CD4-positive, alpha-beta T cell (primary cell): ENCODE measurements at regions of chr4 and their contacts with region 1.

Region 1: GRCh38 chr4:55444827-55445226 is 49.1 kb downstream of the TMEM165 start:
- DNase-seq: peak in 2 of 14 experiments; percentile 20 to 26
- ATAC-seq: no peak
- H3K4me3 ChIP-seq: no peak overlapping the region
- H3K4me3 Mint-ChIP-seq: no peak overlapping the region
- H3K27ac ChIP-seq: no peak overlapping the region
- H3K27ac Mint-ChIP-seq: no peak overlapping the region
- H3K4me1 ChIP-seq: peaks cover 5% of the 10 kb centered on the region
- H3K4me1 Mint-ChIP-seq: peaks cover 23% of the 10 kb centered on the region
- H3K27me3 ChIP-seq: no peaks in the 10 kb centered on the region
- H3K27me3 Mint-ChIP-seq: no peaks in the 10 kb centered on the region
- CTCF ChIP-seq: no peak

Region 2: DNA sequence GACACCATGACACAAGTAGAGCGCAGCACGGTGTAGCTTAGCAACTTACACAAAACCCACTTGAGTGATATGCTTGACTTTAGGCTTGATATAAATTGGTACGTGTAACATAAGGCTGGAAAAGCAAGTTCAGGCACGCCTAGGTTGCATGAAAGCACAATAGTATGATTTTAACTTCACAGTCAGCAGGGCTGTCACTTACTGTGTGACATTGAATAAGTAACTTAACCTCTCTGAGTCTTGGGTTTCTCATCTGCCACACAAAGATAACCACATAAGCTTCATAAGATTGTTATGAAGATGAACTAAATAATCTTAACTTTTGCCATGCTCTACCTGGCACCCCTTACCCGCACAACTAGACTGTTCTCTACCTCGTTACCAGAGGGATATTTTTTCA is 89.3 kb before region 1 on chr4:
- CTCF ChIA-PET with region 1: no interaction called
- POLR2A ChIA-PET with region 1: no interaction called
- intact Hi-C with region 1: no loop called
- DNase-seq: no peak
- ATAC-seq: no peak
- H3K4me3 ChIP-seq: no peak overlapping the region
- H3K4me3 Mint-ChIP-seq: no peak overlapping the region
- H3K27ac ChIP-seq: no peak overlapping the region
- H3K27ac Mint-ChIP-seq: no peak overlapping the region
- H3K4me1 ChIP-seq: no peaks in the 10 kb centered on the region
- H3K4me1 Mint-ChIP-seq: no peaks in the 10 kb centered on the region
- H3K27me3 ChIP-seq: no peaks in the 10 kb centered on the region
- H3K27me3 Mint-ChIP-seq: no peaks in the 10 kb centered on the region
- CTCF ChIP-seq: no peak

Region 3: DNA sequence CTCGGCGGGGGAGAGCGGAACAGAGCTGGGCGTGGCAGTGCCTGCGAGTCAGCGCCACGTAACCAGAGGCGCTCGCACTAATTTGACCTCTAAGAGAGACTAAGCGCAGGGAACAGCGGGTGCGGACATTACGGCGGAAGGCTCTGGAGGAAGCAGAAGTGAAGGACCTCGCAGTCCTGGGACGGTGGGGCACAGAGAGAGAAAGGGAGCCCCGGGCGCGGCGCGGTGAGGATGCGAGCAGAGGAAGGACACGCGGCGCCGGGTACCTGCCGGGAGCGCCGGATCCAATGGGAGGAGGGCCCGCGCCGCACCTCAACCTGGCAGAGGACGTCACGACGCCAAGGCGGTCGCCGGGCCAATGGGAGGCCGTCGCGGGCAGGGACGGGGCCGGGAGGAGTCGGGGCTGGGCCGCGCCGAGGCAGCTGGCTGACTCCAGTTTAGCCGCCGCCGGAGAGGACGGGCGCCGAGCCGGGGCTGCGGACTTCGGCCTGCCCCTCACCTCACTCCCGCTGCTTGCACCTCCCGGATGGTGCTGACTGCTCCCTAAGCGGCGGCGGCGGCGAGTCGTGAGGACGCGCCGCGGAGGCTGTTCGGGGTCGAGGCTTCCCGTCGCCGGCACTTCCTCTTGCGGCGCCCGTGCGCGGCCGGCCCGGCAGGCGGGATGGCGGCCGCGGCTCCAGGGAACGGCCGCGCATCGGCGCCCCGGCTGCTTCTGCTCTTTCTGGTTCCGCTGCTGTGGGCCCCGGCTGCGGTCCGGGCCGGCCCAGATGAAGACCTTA is 49.1 kb before region 1 on chr4 and contains the start of gene TMEM165:
- CTCF ChIA-PET with region 1: interaction called, 3 read pairs
- POLR2A ChIA-PET with region 1: interaction called, 3 read pairs
- intact Hi-C with region 1: loop called in 1 of 2 experiments (anchors 5 kb)
- DNase-seq: peak; percentile 77 to 94 (median 84)
- ATAC-seq: peak; percentile 93
- H3K4me3 ChIP-seq: peak within 1 kb of the TSS; percentile 79
- H3K4me3 Mint-ChIP-seq: peak within 1 kb of the TSS; percentile 97
- H3K27ac ChIP-seq: peak within 1 kb of the TSS; percentile 73 to 94
- H3K27ac Mint-ChIP-seq: peak within 1 kb of the TSS; percentile 89
- H3K4me1 ChIP-seq: peaks cover 34% of the 10 kb centered on the region
- H3K4me1 Mint-ChIP-seq: peaks cover 44% of the 10 kb centered on the region
- H3K27me3 ChIP-seq: no peaks in the 10 kb centered on the region
- H3K27me3 Mint-ChIP-seq: no peaks in the 10 kb centered on the region
- CTCF ChIP-seq: no peak
- total RNA-seq, gene TMEM165: 44.8 to 46.0 TPM

Region 4: GRCh38 chr4:55554453-55555030 is 109.7 kb after region 1 on chr4:
- CTCF ChIA-PET with region 1: interaction called, 4 read pairs
- POLR2A ChIA-PET with region 1: no interaction called
- intact Hi-C with region 1: loop called (anchors 5 kb)
- DNase-seq: peak in 4 of 14 experiments; percentile 10 to 65 (median 62)
- ATAC-seq: peak; percentile 55
- H3K4me3 ChIP-seq: no peak overlapping the region
- H3K4me3 Mint-ChIP-seq: no peak overlapping the region
- H3K27ac ChIP-seq: no peak overlapping the region
- H3K27ac Mint-ChIP-seq: no peak overlapping the region
- H3K4me1 ChIP-seq: no peaks in the 10 kb centered on the region
- H3K4me1 Mint-ChIP-seq: no peaks in the 10 kb centered on the region
- H3K27me3 ChIP-seq: no peaks in the 10 kb centered on the region
- H3K27me3 Mint-ChIP-seq: peaks cover 4% of the 10 kb centered on the region
- CTCF ChIP-seq: peak; percentile 78